Activated naive CD4-positive, alpha-beta T cell treated with anti-CD3 and anti-CD28 coated beads for 36 hours (primary cell): ENCODE measurements at regions of chr2 and their contacts with region 1.

Region 1: DNA sequence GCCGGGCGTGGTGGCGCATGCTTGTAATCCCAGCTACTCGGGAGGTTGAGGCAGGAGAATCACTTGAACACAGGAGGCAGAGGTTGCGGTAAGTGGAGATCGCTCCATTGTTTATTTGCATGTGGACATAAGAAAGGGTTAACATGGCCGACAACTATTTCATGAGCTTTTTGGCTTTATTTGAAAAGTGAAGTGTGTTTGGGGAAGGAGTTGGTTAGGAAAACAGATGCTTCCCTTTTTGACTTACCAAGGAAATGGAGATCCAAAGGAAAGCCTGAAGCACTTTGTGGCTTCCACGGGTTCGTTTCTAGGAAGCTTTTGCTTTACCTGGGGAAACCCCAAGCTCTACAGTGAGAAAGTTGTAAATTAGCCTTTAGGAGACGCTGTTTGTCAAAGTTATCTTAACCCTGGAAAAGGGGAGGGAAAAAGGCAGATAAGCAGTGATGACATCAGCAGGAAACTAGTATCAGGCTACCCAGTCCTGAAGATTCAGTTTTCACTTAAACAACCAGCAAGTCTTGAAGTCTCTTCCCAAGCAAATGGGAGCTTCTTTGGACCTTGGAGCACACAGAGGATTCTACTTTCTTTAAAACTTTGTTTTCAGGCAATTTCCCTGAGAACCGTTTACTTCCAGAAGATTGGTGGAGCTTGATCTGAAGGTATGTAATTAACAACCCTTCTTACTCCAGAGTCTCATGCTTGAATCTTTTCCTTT is at the start of gene CASP10:
- DNase-seq: peak; percentile 32
- H3K4me3 Mint-ChIP-seq: peak within 1 kb of the TSS; percentile 97
- H3K27ac Mint-ChIP-seq: peak within 1 kb of the TSS; percentile 96
- H3K4me1 Mint-ChIP-seq: peaks cover 39% of the 10 kb centered on the region
- H3K27me3 Mint-ChIP-seq: no peaks in the 10 kb centered on the region
- total RNA-seq, gene CASP10: 22.0 to 22.1 TPM

Region 2: GRCh38 chr2:200042944-200043343 is 1139.9 kb before region 1 on chr2:
- CTCF ChIA-PET with region 1: no interaction called
- intact Hi-C with region 1: no loop called
- DNase-seq: no peak
- H3K4me3 Mint-ChIP-seq: no peak overlapping the region
- H3K27ac Mint-ChIP-seq: no peak overlapping the region
- H3K4me1 Mint-ChIP-seq: no peaks in the 10 kb centered on the region
- H3K27me3 Mint-ChIP-seq: peaks cover 7% of the 10 kb centered on the region

Region 3: DNA sequence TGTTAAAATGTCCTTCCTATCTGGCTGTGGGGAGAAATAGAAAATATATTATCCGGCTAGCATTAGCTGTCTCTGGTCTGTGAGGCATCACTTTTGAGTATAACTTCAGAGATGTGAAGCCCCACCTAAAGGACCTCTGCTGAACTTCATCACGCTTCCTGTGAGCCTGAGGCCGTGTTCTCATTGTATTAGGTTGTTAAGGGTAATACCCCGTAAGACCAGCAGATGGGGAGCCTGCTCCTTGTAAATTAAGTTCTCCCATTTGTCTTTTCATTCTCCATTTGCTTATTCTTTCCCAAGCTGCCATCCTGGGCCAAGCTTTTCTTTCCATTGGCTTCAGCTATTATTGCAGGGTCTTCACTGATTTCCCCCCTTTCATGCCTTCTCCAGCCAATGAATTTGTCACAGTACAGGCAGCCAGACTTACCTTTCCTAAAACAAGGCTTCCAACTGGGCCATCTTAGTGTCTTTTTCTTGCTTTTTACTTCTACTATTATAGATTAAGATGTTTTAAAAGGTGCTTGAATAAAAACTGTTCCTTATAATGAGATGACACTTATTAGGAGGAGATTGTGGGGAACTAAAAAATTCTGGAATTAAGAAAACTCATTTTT is 281.2 kb before region 1 on chr2:
- CTCF ChIA-PET with region 1: interaction called, 24 read pairs
- intact Hi-C with region 1: no loop called
- DNase-seq: peak; percentile 89
- H3K4me3 Mint-ChIP-seq: no peak overlapping the region
- H3K27ac Mint-ChIP-seq: peak overlapping the region; percentile 84
- H3K4me1 Mint-ChIP-seq: peaks cover 7% of the 10 kb centered on the region
- H3K27me3 Mint-ChIP-seq: no peaks in the 10 kb centered on the region

Region 4: GRCh38 chr2:201130524-201131186 is 52.2 kb before region 1 on chr2:
- CTCF ChIA-PET with region 1: interaction called, 9 read pairs
- intact Hi-C with region 1: loop called (anchors 1 kb)
- DNase-seq: peak; percentile 68
- H3K4me3 Mint-ChIP-seq: peak overlapping the region; percentile 76
- H3K27ac Mint-ChIP-seq: peak overlapping the region; percentile 96
- H3K4me1 Mint-ChIP-seq: peaks cover 56% of the 10 kb centered on the region
- H3K27me3 Mint-ChIP-seq: no peaks in the 10 kb centered on the region

Region 5: GRCh38 chr2:201208563-201209252 is 25.9 kb after region 1 on chr2:
- CTCF ChIA-PET with region 1: interaction called, 4 read pairs
- intact Hi-C with region 1: loop called (anchors 1 kb)
- DNase-seq: no peak
- H3K4me3 Mint-ChIP-seq: no peak overlapping the region
- H3K27ac Mint-ChIP-seq: no peak overlapping the region
- H3K4me1 Mint-ChIP-seq: peaks cover 43% of the 10 kb centered on the region
- H3K27me3 Mint-ChIP-seq: no peaks in the 10 kb centered on the region

Region 6: DNA sequence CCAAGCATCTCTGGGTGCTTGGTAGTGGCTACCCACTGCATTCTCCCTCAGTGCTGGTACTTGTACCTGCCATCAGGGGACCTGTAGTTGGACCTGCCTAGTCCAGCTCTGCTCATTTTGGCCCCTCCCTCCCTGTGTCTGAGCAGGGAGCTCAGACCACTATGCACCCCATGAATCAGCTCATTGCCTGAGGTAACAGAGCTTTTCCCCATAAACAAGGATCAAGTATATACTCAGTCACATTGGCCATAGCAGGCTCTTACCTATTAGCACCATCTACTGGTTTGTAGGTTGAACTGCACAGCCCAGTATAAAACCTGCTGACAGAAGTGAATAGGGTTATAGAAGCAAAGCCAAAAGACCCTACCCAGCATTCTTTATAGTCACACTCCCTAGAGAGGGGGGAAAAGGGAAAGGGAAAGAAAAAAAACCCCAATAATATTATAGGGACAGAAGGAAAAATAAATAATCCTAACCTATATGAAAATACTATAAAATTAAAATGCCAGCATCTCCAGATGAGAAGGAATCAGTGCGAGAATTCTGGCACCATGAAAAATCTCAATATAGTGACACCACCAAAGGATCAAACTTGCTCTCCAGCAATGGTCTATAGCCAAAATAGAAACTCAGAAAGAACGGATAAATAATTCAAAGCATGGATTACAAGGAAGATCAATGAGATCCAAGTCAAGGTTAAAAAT is 181.2 kb after region 1 on chr2:
- CTCF ChIA-PET with region 1: interaction called, 4 read pairs
- intact Hi-C with region 1: loop called (anchors 1 kb)
- DNase-seq: peak; percentile 48
- H3K4me3 Mint-ChIP-seq: no peak overlapping the region
- H3K27ac Mint-ChIP-seq: no peak overlapping the region
- H3K4me1 Mint-ChIP-seq: peaks cover 13% of the 10 kb centered on the region
- H3K27me3 Mint-ChIP-seq: no peaks in the 10 kb centered on the region

Region 7: DNA sequence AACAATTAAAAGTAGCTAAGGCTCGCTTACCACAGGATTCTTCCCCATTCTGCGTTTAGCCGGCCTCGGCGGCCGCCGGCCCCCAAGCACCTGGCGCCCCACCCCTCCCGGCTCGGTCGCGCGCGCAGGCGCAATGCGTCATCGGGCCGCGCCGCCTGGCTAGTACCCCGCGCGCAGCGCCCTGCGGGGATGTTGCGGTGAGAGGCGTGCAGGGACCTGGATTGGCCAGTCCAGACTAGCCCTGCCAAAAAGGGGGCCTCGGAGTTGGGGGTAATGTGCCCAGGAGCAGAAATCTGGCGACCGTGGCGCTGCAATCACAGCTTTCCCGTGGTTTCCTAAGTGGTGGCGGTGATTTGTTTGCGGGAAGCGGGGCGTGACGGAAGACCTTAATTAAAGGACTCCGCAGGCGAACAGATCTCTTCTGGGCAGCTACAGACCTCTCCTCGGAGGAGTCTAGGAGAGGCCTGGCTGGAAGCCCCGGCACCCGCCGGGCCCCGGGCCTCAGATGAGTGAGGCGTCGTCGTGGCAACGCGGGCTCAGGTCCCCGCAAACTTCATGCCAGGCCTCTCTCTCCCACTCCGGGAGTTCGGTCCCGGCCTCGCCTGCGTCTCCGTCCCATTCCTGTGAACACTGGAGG is 459.9 kb after region 1 on chr2:
- CTCF ChIA-PET with region 1: no interaction called
- intact Hi-C with region 1: loop called (anchors 2 kb)
- DNase-seq: peak; percentile 87
- H3K4me3 Mint-ChIP-seq: peak overlapping the region; percentile 79
- H3K27ac Mint-ChIP-seq: peak overlapping the region; percentile 79
- H3K4me1 Mint-ChIP-seq: peaks cover 11% of the 10 kb centered on the region
- H3K27me3 Mint-ChIP-seq: no peaks in the 10 kb centered on the region

Region 8: DNA sequence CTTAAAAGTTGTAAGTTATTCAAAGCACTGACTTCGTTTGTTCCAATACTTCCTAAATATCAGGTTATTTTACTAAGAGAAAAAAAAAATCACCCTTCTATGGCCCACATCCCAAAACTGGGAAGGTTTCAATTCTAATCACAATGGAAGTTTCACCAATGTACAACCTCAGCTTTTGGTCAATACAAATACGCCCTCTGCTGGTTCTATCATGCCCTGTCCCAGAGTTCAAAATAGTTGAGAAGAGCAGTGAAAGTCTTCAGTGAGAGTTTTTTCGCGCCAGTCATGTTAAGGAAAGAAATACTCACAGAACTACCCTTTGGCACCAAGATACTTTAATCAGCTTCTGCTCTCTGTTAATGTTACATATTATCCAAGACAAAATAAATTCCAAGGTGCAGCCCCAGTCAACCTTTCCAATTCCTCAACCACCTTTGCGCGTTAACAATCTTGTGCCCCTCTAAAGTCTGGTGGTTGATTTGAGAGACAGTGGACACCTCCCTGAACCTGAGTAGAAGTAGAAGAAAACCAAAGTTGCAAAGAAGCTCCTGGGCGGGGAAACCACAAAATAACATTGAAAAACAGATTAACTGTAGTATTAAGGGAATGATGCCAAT is 995.6 kb after region 1 on chr2:
- CTCF ChIA-PET with region 1: no interaction called
- intact Hi-C with region 1: loop called (anchors 10 kb)
- DNase-seq: peak; percentile 78
- H3K4me3 Mint-ChIP-seq: no peak overlapping the region
- H3K27ac Mint-ChIP-seq: no peak overlapping the region
- H3K4me1 Mint-ChIP-seq: no peaks in the 10 kb centered on the region
- H3K27me3 Mint-ChIP-seq: no peaks in the 10 kb centered on the region